ENCODE measurements at regions of chr11 and their contacts with region 1.

Region 1: DNA sequence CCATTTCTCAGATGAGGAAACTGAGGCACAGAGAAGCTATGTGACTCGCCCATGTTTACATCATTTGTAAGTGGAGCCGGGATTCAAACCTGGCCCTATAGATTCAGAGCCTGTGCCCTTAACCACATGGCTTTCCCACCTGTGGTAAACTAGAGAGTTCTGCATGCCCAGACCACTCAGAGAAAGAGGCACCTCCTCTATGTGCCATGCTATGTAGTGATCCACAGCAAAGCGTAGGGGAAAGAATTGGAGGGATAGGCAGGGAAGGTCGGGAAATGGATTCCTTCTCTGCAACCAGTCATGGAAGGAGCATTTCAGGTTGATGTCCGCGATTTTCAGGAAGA is 15.4 kb upstream of the POU2AF2 start:
- DNase-seq: no peak
- ATAC-seq: peak; percentile 8
- H3K4me3 ChIP-seq: no peak overlapping the region
- H3K27ac ChIP-seq: no peak overlapping the region
- H3K4me1 ChIP-seq: no peaks in the 10 kb centered on the region
- H3K27me3 ChIP-seq: no peaks in the 10 kb centered on the region

Region 2: GRCh38 chr11:110453684-110454354 is 776.3 kb before region 1 on chr11:
- intact Hi-C with region 1: loop called in 1 of 2 experiments (anchors 10 kb)
- DNase-seq: no peak
- ATAC-seq: no peak
- H3K4me3 ChIP-seq: no peak overlapping the region
- H3K27ac ChIP-seq: no peak overlapping the region
- H3K4me1 ChIP-seq: peaks cover 0 to 1% of the 10 kb centered on the region in 2 donors
- H3K27me3 ChIP-seq: no peaks in the 10 kb centered on the region

Region 3: GRCh38 chr11:110463153-110463552 is 766.9 kb before region 1 on chr11:
- intact Hi-C with region 1: loop called (anchors 10 kb)
- DNase-seq: peak; percentile 63 to 80
- ATAC-seq: peak; percentile 69
- H3K4me3 ChIP-seq: no peak overlapping the region
- H3K27ac ChIP-seq: no peak overlapping the region
- H3K4me1 ChIP-seq: no peaks in the 10 kb centered on the region
- H3K27me3 ChIP-seq: no peaks in the 10 kb centered on the region

Region 4: GRCh38 chr11:110711776-110712658 is 518.1 kb before region 1 on chr11 and contains the start of gene ARHGAP20:
- intact Hi-C with region 1: loop called (anchors 10 kb)
- DNase-seq: peak; percentile 85 to 92
- ATAC-seq: peak; percentile 94
- H3K4me3 ChIP-seq: peak within 1 kb of the TSS; percentile 41 to 52
- H3K27ac ChIP-seq: no peak within 1 kb of the TSS
- H3K4me1 ChIP-seq: no peaks in the 10 kb centered on the region
- H3K27me3 ChIP-seq: no peaks in the 10 kb centered on the region
- total RNA-seq, gene ARHGAP20: 3.5 to 5.1 TPM

Region 5: GRCh38 chr11:111001986-111002611 is 228.0 kb before region 1 on chr11:
- intact Hi-C with region 1: loop called in 1 of 2 experiments (anchors 10 kb)
- DNase-seq: no peak
- ATAC-seq: peak; percentile 83
- H3K4me3 ChIP-seq: no peak overlapping the region
- H3K27ac ChIP-seq: no peak overlapping the region
- H3K4me1 ChIP-seq: peaks cover 8 to 10% of the 10 kb centered on the region in 2 donors
- H3K27me3 ChIP-seq: no peaks in the 10 kb centered on the region

Measured in aorta (tissue), 5 donors.